Activated T-helper 2 cell treated with anti-CD3 and anti-CD28 coated beads, Interferon-gamma antibody, Interleukin-2, Interleukin-4, amounts not matched to agents 10 μg/mL and 5 μg/mL and 100 μg/mL, durations not matched to agents 14 hours and 24 hours and 36 hours (primary cell): ENCODE measurements at regions of chr3 and their contacts with region 1.

Region 1: GRCh38 chr3:69306239-69307185 is 79.4 kb downstream of the FRMD4B start:
- DNase-seq: peak; percentile 65
- H3K4me3 Mint-ChIP-seq: no peak overlapping the region
- H3K27ac Mint-ChIP-seq: peak overlapping the region; percentile 75
- H3K4me1 Mint-ChIP-seq: peaks cover 26% of the 10 kb centered on the region
- H3K27me3 Mint-ChIP-seq: peaks cover 1% of the 10 kb centered on the region

Region 2: GRCh38 chr3:69120879-69121464 is 185.5 kb before region 1 on chr3:
- intact Hi-C with region 1: loop called (anchors 1 kb)
- DNase-seq: peak; percentile 69
- H3K4me3 Mint-ChIP-seq: no peak overlapping the region
- H3K27ac Mint-ChIP-seq: no peak overlapping the region
- H3K4me1 Mint-ChIP-seq: peaks cover 4% of the 10 kb centered on the region
- H3K27me3 Mint-ChIP-seq: peaks cover 5% of the 10 kb centered on the region

Region 3: DNA sequence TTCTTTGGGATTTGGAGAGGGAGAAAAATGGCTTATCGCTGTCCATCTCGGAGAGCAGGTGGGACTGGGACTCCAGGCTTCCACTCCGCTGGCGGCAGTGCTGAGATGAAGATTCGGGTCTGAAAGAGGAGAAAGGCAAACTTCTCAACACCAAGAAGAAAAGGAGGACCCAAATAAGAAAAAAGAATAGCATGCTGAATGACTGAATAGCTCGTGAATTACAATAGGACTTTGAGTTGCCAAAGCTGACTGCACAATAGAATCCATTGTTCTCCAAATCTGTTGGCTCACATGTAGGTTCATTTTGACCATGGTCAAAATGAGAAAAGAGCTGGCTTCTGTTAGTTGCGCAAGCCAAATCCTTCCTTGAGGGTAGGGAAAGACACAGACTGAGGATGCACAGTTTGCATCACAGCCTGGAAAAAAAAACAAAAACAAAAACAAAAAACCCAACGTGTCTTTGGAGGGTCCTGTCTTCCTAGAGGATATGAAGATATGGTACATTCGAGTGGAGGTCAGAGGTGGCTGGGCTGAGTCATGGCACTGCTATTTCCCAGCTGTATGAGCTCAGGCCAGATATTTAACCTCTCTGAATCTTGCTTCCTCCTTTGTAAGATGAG is 124.8 kb before region 1 on chr3:
- intact Hi-C with region 1: loop called (anchors 5 kb)
- DNase-seq: no peak
- H3K4me3 Mint-ChIP-seq: no peak overlapping the region
- H3K27ac Mint-ChIP-seq: peak overlapping the region; percentile 24
- H3K4me1 Mint-ChIP-seq: peaks cover 22% of the 10 kb centered on the region
- H3K27me3 Mint-ChIP-seq: no peaks in the 10 kb centered on the region

Region 4: GRCh38 chr3:69204315-69204957 is 102.1 kb before region 1 on chr3:
- intact Hi-C with region 1: no loop called
- DNase-seq: no peak
- H3K4me3 Mint-ChIP-seq: peak overlapping the region; percentile 41
- H3K27ac Mint-ChIP-seq: peak overlapping the region; percentile 91
- H3K4me1 Mint-ChIP-seq: peaks cover 61% of the 10 kb centered on the region
- H3K27me3 Mint-ChIP-seq: no peaks in the 10 kb centered on the region

Region 5: GRCh38 chr3:69236812-69237707 is 69.5 kb before region 1 on chr3:
- intact Hi-C with region 1: loop called (anchors 2 kb)
- DNase-seq: no peak
- H3K4me3 Mint-ChIP-seq: peak overlapping the region; percentile 71
- H3K27ac Mint-ChIP-seq: peak overlapping the region; percentile 9
- H3K4me1 Mint-ChIP-seq: peaks cover 18% of the 10 kb centered on the region
- H3K27me3 Mint-ChIP-seq: no peaks in the 10 kb centered on the region

Region 6: GRCh38 chr3:69324362-69325025 is 18.0 kb after region 1 on chr3:
- intact Hi-C with region 1: loop called (anchors 1 kb)
- DNase-seq: no peak
- H3K4me3 Mint-ChIP-seq: no peak overlapping the region
- H3K27ac Mint-ChIP-seq: peak overlapping the region; percentile 72
- H3K4me1 Mint-ChIP-seq: peaks cover 52% of the 10 kb centered on the region
- H3K27me3 Mint-ChIP-seq: no peaks in the 10 kb centered on the region

Region 7: GRCh38 chr3:69532544-69533224 is 226.2 kb after region 1 on chr3:
- intact Hi-C with region 1: no loop called
- DNase-seq: no peak
- H3K4me3 Mint-ChIP-seq: no peak overlapping the region
- H3K27ac Mint-ChIP-seq: no peak overlapping the region
- H3K4me1 Mint-ChIP-seq: no peaks in the 10 kb centered on the region
- H3K27me3 Mint-ChIP-seq: no peaks in the 10 kb centered on the region